ENCODE measurements at regions of chr10 and their contacts with region 1.

Region 1: DNA sequence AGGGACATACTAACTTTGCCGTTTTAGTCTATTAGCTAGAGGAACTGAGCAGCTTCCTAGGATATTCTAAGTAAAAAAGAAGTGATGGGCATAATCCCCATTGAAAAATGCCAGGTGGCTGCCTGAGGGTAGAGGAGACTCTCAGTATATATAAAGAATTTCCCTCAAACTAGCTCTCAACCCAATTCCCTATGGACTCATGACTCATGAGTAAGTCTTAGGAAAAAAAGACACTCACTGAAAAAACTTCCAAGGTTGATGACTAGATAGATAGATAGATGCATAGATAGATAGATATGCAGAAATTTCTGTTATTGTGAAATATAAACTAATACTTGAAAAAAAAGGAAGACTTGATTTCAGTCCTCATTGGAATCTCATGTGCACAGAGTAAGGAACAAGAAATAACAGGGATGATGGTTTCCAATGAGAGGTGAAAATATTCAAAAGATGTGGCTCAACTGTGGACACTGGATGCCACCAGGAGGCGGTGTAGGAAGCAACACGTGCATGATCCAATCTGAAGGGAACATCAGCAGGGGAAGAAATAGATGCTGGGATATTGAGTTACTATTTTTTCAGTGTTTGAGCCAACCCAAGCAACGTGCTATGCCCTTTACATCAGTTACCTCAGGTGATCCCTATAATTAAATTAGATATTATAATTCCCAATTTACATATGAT is 711.0 kb upstream of the LRRTM3 start:
- DNase-seq: no peak
- H3K4me3 ChIP-seq: no peak overlapping the region
- H3K27ac ChIP-seq: no peak overlapping the region
- H3K4me1 ChIP-seq: no peaks in the 10 kb centered on the region
- H3K27me3 ChIP-seq: no peaks in the 10 kb centered on the region
- CTCF ChIP-seq: peak in 1 of 2 donors; percentile 39

Region 2: DNA sequence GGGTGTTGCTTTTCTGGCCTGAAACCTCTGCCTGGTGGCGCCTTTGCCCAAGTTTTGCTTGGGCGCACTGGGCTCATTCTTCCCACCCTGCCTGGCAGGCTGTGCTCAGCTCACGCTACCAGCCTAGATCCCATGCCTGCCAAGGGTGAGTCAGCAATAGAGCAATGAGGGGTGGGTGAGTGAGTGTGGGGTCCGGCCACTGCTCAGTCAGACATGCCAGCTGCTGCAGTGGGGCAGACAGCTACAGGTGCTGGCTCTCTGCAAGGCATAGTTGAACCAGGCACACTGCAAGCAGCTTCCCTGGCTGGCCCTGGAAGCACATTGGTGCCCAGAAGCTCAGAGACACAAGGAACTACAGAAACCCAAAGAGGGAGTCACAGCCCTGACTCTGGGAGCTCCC is 30.1 kb after region 1 on chr10:
- CTCF ChIA-PET with region 1: no interaction called
- dilution Hi-C with region 1: no loop called
- in situ Hi-C with region 1: no loop called
- intact Hi-C with region 1: no loop called
- DNase-seq: no peak
- H3K4me3 ChIP-seq: no peak overlapping the region
- H3K27ac ChIP-seq: no peak overlapping the region
- H3K4me1 ChIP-seq: no peaks in the 10 kb centered on the region
- H3K27me3 ChIP-seq: no peaks in the 10 kb centered on the region
- CTCF ChIP-seq: no peak

Region 3: DNA sequence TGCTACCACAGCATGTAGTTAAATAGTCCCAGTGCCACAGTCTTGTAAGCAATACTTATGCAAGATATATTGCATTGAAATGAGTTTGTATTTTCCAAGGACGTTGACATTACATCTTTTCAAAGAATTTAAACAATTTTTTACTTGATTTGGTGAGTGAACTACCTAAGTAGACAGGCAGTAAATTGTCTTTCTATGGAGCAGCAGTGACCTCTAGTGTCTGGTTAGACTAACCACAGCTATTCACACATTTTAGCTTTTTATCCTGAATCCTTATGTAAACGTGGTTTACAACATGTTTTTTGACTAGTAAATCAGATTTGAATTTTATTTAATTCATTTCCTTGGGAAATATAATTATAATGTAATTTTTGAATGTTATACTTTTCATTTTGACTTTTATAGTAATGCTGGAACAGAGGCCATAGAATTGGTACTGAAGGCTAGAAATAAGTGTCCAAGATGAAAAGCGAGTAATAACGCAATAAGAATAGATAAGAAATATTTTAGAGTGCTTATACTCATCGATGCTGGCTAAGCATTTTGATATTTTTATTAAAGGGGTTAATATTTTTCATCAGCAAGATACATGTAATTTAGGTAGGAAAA is 716.6 kb after region 1 on chr10:
- CTCF ChIA-PET with region 1: no interaction called
- dilution Hi-C with region 1: no loop called
- in situ Hi-C with region 1: no loop called
- intact Hi-C with region 1: loop called (anchors 2 kb)
- DNase-seq: peak; percentile 28
- H3K4me3 ChIP-seq: no peak overlapping the region
- H3K27ac ChIP-seq: no peak overlapping the region
- H3K4me1 ChIP-seq: no peaks in the 10 kb centered on the region
- H3K27me3 ChIP-seq: peaks cover 17% of the 10 kb centered on the region
- CTCF ChIP-seq: peak; percentile 76 to 84